A549 (cell line): ENCODE measurements at regions of chr16 and their contacts with region 1.

Region 1: GRCh38 chr16:85610508-85611332 is 2.4 kb upstream of the GSE1 start:
- DNase-seq: peak; percentile 84 to 85
- ATAC-seq: peak; percentile 32 to 63
- H3K4me3 ChIP-seq: peak overlapping the region; percentile 96
- H3K27ac ChIP-seq: peak overlapping the region; percentile 98 to 99
- H3K4me1 ChIP-seq: peaks cover 22% of the 10 kb centered on the region
- CTCF ChIP-seq: peak; percentile 99
- EP300 ChIP-seq: no peak
- POLR2A ChIP-seq: no peak
- RAD21 ChIP-seq: peak; percentile 89 to 98

Region 2: DNA sequence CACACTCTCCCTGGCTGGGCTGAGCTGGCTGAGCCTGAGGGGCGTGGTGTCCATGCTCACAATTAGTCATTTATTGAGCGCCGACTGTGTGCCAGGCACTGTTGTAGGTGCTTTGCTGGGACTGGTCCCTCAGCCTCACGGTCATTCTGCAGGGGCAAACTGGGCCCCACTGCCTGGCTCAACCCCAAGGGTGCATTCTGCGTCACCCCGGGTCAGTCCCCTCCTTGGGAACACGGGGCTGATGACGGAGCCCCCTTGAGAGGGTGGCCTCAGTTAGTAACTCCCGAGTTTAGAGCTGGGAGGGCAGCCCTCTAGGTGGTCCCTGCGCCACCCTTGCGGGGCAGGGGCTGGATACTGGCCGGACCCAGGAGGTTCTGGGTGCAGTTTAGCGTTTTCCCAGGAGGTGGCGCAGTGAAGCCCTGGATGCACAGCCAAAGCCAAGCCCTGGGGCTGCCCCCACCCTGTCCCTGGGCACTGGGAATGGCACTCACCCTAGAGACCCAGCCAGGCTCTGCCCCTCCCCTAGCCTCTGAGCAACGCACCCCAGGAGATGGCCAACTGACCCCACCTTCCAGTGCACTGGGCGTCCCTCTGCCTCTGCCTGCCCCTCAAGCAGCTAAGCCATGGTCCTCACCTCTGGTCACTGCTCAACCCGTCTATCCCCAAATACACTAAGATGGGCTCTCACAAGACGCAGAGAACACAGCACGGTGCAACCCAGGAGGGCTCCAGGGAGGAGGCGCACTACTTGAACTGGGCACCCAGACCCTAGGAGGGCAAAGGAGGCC is 240.8 kb before region 1 on chr16:
- CTCF ChIA-PET with region 1: interaction called, 10 read pairs
- POLR2A ChIA-PET with region 1: no interaction called
- DNase-seq: peak; percentile 33 to 79
- ATAC-seq: peak; percentile 68 to 92; a peak in 5 of 6 replicates
- H3K4me3 ChIP-seq: no peak overlapping the region
- H3K27ac ChIP-seq: peak overlapping the region in 1 of 2 experiments; percentile 57; a peak in 2 of 6 replicates
- H3K4me1 ChIP-seq: peaks cover 17% of the 10 kb centered on the region
- CTCF ChIP-seq: peak; percentile 70
- EP300 ChIP-seq: no peak
- POLR2A ChIP-seq: no peak
- RAD21 ChIP-seq: peak; percentile 64 to 70

Region 3: GRCh38 chr16:85428168-85428898 is 182.4 kb before region 1 on chr16:
- CTCF ChIA-PET with region 1: interaction called, 85 read pairs
- POLR2A ChIA-PET with region 1: interaction called, 3 read pairs
- DNase-seq: peak; percentile 55 to 68
- ATAC-seq: peak; percentile 57 to 83; a peak in 5 of 6 replicates
- H3K4me3 ChIP-seq: no peak overlapping the region
- H3K27ac ChIP-seq: no peak overlapping the region
- H3K4me1 ChIP-seq: peaks cover 2% of the 10 kb centered on the region; the same call in 2 of the 3 replicates
- CTCF ChIP-seq: peak; percentile 67
- EP300 ChIP-seq: no peak
- POLR2A ChIP-seq: no peak
- RAD21 ChIP-seq: peak; percentile 53

Region 4: GRCh38 chr16:85461814-85462713 is 148.7 kb before region 1 on chr16:
- CTCF ChIA-PET with region 1: interaction called, 11 read pairs
- POLR2A ChIA-PET with region 1: interaction called, 5 read pairs
- DNase-seq: no peak
- ATAC-seq: peak; percentile 27 to 61; a peak in 4 of 6 replicates
- H3K4me3 ChIP-seq: peak overlapping the region; percentile 37
- H3K27ac ChIP-seq: peak overlapping the region; percentile 13 to 87; a peak in 5 of 6 replicates
- H3K4me1 ChIP-seq: peaks cover 43% of the 10 kb centered on the region
- CTCF ChIP-seq: no peak
- EP300 ChIP-seq: no peak
- POLR2A ChIP-seq: no peak
- RAD21 ChIP-seq: no peak

Region 5: DNA sequence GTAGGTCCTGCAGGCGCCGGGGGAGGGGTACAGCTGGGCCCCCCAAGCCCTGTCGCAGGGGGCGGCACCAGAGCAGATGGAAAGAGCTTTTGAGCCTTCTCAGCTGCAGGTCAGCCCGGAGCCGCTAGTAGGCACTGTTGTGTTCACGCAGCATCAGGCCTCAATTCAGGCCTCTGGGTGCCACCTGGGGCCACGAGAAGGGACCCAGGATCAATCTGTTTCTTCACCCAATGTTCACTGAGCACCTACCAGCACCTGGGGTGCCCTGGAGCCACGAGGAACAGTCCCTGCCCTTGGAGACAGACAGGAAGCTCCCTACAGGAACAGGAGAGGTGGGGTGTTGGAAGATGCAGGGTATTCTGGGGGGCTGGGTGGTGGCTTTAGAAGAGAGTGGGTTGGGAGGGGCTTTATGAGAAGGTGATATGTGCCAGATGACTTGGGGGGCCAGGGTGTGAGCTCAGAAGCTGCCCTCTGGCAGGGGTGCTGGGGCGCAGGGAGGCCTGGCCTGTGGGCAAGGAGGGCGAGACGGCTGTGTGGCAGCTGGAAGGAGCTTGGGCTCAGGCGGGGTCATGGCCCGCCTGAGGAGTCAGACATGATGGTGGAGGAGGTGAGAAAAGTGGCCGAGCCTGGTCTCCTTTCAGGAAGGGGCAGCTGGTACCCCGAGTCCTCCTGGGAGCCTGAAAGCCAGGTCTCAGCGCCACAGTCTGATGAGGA is 119.5 kb before region 1 on chr16:
- CTCF ChIA-PET with region 1: interaction called, 21 read pairs
- POLR2A ChIA-PET with region 1: no interaction called
- DNase-seq: peak; percentile 52 to 63
- ATAC-seq: peak; percentile 37 to 82; a peak in 3 of 6 replicates
- H3K4me3 ChIP-seq: no peak overlapping the region
- H3K27ac ChIP-seq: peak overlapping the region; percentile 32 to 71; a peak in 5 of 6 replicates
- H3K4me1 ChIP-seq: peaks cover 15% of the 10 kb centered on the region
- CTCF ChIP-seq: peak; percentile 84
- EP300 ChIP-seq: no peak
- POLR2A ChIP-seq: no peak
- RAD21 ChIP-seq: peak; percentile 59 to 69

Region 6: DNA sequence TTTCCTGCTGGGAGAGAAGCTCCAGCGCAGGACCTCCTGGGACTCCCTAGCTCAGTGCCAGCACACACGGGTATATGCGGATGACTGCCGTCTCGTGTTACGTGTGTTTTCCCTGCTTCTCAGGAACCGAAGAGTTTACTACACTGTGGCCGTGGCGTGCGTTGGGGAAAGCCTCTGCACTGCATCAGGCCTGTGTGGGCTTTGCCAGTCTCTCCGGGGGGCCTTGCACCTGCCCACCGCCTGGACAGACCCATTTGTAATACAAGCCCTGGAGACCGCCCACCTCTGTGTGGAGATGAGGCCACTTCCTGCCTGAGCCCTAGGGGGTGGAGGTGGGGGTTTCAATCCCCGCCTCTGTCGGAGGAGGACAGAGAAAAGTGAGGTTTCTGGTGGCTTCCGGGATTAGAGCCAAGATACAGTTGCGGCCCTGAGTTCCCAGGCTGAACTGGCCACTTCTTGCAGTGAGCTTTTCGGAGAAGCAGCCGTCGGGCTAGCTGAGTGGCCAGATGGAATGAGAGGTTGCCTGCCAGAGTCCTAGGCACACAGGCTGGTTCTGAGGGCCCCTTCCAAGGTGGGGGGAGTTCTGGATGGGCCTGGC is 41.0 kb before region 1 on chr16:
- CTCF ChIA-PET with region 1: interaction called, 39 read pairs
- POLR2A ChIA-PET with region 1: no interaction called
- DNase-seq: no peak
- ATAC-seq: no peak
- H3K4me3 ChIP-seq: no peak overlapping the region
- H3K27ac ChIP-seq: no peak overlapping the region
- H3K4me1 ChIP-seq: no peaks in the 10 kb centered on the region
- CTCF ChIP-seq: no peak
- EP300 ChIP-seq: no peak
- POLR2A ChIP-seq: no peak
- RAD21 ChIP-seq: no peak